ENCODE measurements at regions of chr1 and their contacts with region 1.

Region 1: DNA sequence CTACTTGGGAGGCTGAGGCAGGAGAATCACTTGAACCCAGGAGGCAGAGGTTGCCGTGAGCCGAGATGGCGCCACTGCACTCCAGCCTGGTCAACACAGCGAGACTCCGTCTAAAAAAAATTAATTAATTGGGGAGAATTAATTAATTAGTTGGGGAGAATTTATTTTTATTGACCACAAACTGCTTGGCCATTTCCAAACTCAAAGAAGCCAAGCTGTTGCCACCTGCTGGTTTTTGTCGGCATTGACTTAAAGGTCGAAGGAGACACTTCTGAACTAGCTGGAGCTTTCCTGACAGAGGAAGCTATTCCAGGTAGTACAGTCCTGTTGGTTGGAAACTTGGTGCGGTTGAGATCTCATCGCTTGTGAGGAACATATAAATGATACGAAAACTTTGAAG is 13.1 kb downstream of the MAP1LC3C start:
- H3K4me3 ChIP-seq: no peak overlapping the region
- H3K27ac ChIP-seq: no peak overlapping the region
- H3K4me1 ChIP-seq: peaks cover 15% of the 10 kb centered on the region
- CTCF ChIP-seq: peak; percentile 27

Region 2: DNA sequence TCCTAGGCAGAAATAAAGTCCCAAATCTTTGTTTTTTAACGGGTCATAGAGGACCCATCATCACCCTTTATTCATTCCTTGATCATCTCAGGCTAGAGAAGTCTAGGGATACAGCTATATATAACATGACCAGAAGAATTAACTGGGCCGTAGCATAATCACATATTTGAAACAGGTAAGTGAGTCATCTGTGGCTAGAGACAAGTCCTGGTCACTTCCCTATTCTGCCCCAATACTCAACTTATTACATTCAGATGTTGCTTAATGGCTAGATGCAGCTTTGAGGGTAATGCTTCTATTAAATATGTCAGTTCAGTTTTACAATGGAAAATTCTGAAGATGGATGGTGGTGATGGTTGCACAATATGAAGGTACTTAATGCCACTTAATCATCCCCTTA is 90.8 kb before region 1 on chr1:
- CTCF ChIA-PET with region 1: interaction called, 40 read pairs
- POLR2A ChIA-PET with region 1: no interaction called
- H3K4me3 ChIP-seq: no peak overlapping the region
- H3K27ac ChIP-seq: no peak overlapping the region
- H3K4me1 ChIP-seq: no peaks in the 10 kb centered on the region
- CTCF ChIP-seq: no peak

Region 3: DNA sequence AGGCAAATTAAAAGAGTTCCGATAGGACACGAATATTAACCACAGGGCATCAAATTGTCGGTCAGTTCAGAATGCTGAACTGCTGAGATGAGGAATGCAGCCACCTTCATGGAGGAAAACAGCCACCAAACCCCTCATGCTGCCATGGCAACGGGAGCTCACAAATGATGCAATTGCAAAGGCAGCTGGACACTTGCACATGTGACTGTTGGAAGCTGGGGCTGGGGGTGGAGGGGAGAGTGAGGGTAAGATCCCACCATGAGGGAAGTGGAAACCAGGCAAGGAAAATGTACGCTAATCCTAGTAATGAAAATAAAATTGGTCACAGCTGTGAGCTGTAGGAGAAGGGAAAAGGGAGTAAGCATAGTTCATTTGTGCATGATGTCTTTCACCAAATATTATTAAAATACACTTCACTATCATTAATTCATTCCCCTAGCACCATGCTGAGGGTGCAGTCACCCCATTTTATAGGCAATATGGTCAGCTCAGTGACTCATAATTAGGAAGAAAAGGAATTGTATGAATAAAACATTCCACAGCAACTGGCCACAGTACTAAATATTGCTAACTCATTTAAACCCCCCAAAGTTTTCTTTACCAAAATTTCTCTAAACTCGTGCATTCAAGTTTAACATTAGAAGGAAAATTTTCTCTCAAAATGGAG is 13.0 kb before region 1 on chr1:
- CTCF ChIA-PET with region 1: interaction called, 13 read pairs
- POLR2A ChIA-PET with region 1: interaction called, 3 read pairs
- H3K4me3 ChIP-seq: no peak overlapping the region
- H3K27ac ChIP-seq: no peak overlapping the region
- H3K4me1 ChIP-seq: no peaks in the 10 kb centered on the region
- CTCF ChIP-seq: no peak